Mammary epithelial cell (primary cell): ENCODE measurements at regions of chr2 and their contacts with region 1.

Region 1: DNA sequence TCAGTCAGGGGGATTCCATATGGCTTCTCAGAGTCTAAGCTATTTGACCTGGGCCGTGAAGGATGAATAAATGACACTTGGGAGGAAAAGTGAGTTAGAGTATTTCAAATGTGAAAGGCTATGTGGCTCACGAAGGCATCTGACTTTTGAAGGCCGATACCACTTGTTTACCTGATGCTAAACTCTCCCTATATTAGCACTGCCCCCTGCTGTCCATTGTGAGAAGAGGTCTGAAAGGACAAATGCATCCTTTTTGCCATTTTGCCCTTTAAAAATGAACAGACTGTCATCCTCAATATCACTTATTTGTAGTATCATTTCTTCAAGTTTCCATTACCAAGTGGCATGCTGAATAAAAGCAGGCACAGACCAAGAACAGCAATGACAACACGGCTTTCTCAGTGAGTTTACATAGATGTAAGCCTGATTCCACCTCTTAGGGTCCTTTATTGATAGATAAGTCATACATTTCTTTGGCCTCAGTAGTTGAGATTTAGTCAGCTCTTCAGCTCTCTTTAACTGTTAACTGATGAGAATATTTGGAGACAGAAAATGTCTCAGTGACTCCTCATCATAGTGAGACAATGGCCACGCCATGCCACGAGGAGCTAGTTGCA is 40.1 kb downstream of the DOCK10 start:
- DNase-seq: peak; percentile 61
- H3K4me3 ChIP-seq: no peak overlapping the region
- H3K27ac ChIP-seq: no peak overlapping the region
- H3K4me1 ChIP-seq: peaks cover 15% of the 10 kb centered on the region
- H3K27me3 ChIP-seq: no peaks in the 10 kb centered on the region
- CTCF ChIP-seq: peak; percentile 82 to 87

Region 2: GRCh38 chr2:224585205-224586088 is 416.7 kb before region 1 on chr2 and contains the start of gene CUL3:
- CTCF ChIA-PET with region 1: no interaction called
- dilution Hi-C with region 1: no loop called
- in situ Hi-C with region 1: no loop called
- intact Hi-C with region 1: loop called (anchors 10 kb)
- DNase-seq: peak; percentile 96
- H3K4me3 ChIP-seq: peak within 1 kb of the TSS; percentile 79 to 100 (median 93)
- H3K27ac ChIP-seq: peak within 1 kb of the TSS; percentile 75
- H3K4me1 ChIP-seq: peaks cover 10% of the 10 kb centered on the region
- H3K27me3 ChIP-seq: no peaks in the 10 kb centered on the region
- CTCF ChIP-seq: no peak
- total RNA-seq, gene CUL3: 45.0 to 62.9 TPM

Region 3: DNA sequence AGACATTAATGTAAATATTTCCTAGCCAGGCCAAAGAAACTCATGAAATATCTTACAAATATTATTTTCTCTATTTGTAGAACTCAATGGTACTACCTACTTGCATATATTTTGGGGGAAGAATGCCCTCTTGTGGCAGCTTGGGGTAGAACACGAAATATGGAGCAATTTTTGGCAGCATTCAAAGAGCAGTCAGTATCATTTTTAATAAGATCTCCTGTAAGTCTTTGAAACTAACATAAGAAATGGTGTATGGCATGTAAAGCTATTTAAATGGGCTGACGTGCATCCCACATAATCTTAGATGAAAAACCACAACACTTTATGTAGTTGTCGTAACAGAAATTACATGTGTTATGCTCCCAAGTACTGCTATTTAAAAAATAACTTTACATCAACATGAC is 223.7 kb before region 1 on chr2:
- CTCF ChIA-PET with region 1: interaction called, 4 read pairs
- dilution Hi-C with region 1: no loop called
- in situ Hi-C with region 1: no loop called
- intact Hi-C with region 1: loop called (anchors 1 kb)
- DNase-seq: peak; percentile 53
- H3K4me3 ChIP-seq: no peak overlapping the region
- H3K27ac ChIP-seq: no peak overlapping the region
- H3K4me1 ChIP-seq: no peaks in the 10 kb centered on the region
- H3K27me3 ChIP-seq: no peaks in the 10 kb centered on the region
- CTCF ChIP-seq: peak; percentile 76 to 81

Region 4: DNA sequence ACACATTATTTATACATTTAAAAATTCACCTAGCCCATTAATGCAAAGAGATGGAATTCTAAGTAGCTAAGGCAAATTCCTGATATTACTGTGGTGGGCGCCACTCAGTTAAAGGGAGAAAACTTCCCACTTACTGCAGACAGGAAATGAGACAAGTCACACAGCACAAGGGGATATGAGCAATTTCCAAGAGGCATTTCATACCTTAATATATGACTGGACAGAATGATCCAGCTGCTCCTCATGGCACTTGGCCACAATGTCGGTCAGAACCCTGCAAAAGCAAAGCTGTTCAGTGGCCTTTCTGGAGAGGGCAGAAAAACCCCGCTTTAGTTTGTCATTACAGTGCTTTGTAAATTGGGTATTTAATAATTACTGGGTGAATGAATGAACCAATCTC is 164.6 kb before region 1 on chr2:
- CTCF ChIA-PET with region 1: no interaction called
- dilution Hi-C with region 1: no loop called
- in situ Hi-C with region 1: no loop called
- intact Hi-C with region 1: no loop called
- DNase-seq: peak; percentile 69
- H3K4me3 ChIP-seq: no peak overlapping the region
- H3K27ac ChIP-seq: no peak overlapping the region
- H3K4me1 ChIP-seq: peaks cover 15% of the 10 kb centered on the region
- H3K27me3 ChIP-seq: no peaks in the 10 kb centered on the region
- CTCF ChIP-seq: no peak

Region 5: GRCh38 chr2:224849264-224849663 is 152.9 kb before region 1 on chr2:
- CTCF ChIA-PET with region 1: interaction called, 3 read pairs
- dilution Hi-C with region 1: no loop called
- in situ Hi-C with region 1: no loop called
- intact Hi-C with region 1: loop called (anchors 1 kb)
- DNase-seq: peak; percentile 32
- H3K4me3 ChIP-seq: no peak overlapping the region
- H3K27ac ChIP-seq: peak overlapping the region; percentile 5
- H3K4me1 ChIP-seq: peaks cover 25% of the 10 kb centered on the region
- H3K27me3 ChIP-seq: no peaks in the 10 kb centered on the region
- CTCF ChIP-seq: peak; percentile 41 to 64

Region 6: DNA sequence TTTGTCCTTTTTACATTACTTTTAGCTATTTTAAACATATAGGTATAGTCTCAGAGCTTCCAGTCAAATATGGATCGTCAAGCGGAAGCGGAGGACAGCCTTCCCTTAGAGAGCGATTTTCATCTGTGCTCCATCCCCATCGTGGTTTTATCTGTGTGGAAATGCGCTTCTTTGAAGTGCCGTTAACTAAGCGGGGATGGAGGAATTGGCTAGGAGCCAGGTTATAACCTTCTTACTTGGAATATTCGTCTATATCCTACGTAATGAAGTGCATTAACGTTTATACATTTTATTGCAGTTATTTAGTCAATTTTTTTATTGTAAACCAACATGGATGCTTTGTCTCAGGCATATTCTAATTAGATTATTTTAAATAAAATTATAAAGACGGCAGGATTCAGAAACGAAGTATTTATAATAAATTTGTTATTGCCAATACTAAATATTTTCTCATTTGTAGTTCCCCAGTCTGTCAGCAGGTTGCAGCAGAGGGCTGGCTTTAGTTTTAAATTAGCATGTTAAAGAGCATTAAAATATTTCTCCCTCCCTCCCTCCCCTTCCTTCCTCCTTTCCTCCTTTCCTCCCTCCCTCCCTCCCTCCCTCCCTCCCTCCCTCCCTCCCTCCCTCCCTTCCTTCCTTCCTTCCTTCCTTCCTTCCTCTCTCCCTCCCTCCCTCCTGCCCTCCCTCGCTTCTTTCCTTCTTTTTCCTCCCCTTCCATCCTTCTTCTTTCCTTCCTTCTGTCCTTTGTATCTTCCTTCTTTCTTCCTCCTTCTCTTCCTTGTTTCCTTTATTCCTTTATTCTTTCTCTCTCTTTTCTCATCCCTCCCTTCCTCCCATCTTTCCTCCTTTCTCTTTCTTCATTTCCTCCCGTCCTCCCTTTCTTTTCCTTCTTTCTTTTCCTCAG is 120.7 kb after region 1 on chr2:
- CTCF ChIA-PET with region 1: no interaction called
- dilution Hi-C with region 1: no loop called
- in situ Hi-C with region 1: no loop called
- intact Hi-C with region 1: loop called (anchors 5 kb)
- DNase-seq: no peak
- H3K4me3 ChIP-seq: no peak overlapping the region
- H3K27ac ChIP-seq: no peak overlapping the region
- H3K4me1 ChIP-seq: peaks cover 10% of the 10 kb centered on the region
- H3K27me3 ChIP-seq: no peaks in the 10 kb centered on the region
- CTCF ChIP-seq: peak; percentile 56 to 58

Region 7: GRCh38 chr2:225660262-225661131 is 658.4 kb after region 1 on chr2:
- CTCF ChIA-PET with region 1: interaction called, 4 read pairs
- dilution Hi-C with region 1: no loop called
- in situ Hi-C with region 1: loop called in 1 of 2 experiments (anchors 10 kb)
- intact Hi-C with region 1: loop called (anchors 1 kb)
- DNase-seq: peak; percentile 48
- H3K4me3 ChIP-seq: no peak overlapping the region
- H3K27ac ChIP-seq: no peak overlapping the region
- H3K4me1 ChIP-seq: no peaks in the 10 kb centered on the region
- H3K27me3 ChIP-seq: no peaks in the 10 kb centered on the region
- CTCF ChIP-seq: peak; percentile 76 to 92